HEK293 (cell line): ENCODE measurements at regions of chr21 and their contacts with region 1.

Region 1: DNA sequence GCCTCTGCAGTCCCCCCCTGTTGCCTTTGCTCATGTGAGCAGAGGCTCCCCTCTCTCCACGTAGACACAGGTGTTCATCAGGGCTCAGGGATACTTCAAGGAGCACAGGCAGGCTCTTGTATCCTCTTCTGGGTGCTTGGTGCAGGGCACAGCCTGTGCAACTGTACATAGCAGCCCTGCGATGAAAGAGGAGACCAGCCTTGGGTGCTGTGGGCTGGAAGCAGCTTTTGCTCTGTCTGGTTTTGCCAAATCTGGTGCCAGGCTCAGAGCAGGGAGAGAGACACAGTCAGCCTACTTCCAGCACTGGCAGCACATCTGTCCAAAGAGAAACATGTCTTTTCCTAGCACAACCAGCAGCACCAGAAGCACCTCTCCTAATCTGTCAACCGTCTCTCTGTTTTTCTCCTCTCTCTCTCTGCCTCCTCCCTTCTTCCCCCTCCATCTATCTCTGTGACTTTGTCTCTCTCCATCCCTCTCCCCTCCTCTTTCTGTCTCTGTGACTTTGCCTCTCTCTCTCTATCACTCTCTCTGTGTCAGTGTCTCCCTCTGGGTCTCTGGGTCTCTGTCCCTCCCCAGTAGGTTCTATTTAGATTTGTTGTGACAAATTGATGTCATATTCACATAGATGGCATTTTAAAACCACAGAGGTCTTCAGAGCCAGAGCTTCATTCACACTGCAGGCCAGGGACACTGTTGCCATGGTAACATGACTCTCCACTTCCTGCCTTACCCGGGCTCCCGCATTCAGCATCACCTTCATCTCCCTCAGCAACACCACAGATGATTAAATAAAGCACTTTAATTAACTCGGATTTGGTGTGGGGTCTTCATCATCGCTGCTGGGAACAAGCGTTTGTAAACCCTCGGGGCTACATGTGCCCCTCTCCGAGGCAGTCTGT is 132.4 kb downstream of the ETS2 start:
- H3K4me3 ChIP-seq: no peak overlapping the region
- H3K27ac ChIP-seq: no peak overlapping the region
- H3K4me1 ChIP-seq: no peaks in the 10 kb centered on the region
- CTCF ChIP-seq: no peak

Region 2: GRCh38 chr21:38965909-38966504 is 27.9 kb after region 1 on chr21:
- CTCF ChIA-PET with region 1: no interaction called
- POLR2A ChIA-PET with region 1: interaction called, 17 read pairs
- H3K4me3 ChIP-seq: no peak overlapping the region
- H3K27ac ChIP-seq: no peak overlapping the region
- H3K4me1 ChIP-seq: peaks cover 2% of the 10 kb centered on the region; the same call in 1 of the 2 replicates
- CTCF ChIP-seq: no peak